Psoas muscle (tissue), 8 donors: ENCODE measurements at regions of chr19 and their contacts with region 1.

Region 1: GRCh38 chr19:29665215-29665825 is at the start of gene PLEKHF1:
- DNase-seq: peak; percentile 93 to 97
- ATAC-seq: peak; percentile 83 to 91 (median 87)
- H3K4me3 ChIP-seq: peak within 1 kb of the TSS; percentile 75
- H3K27ac ChIP-seq: peak within 1 kb of the TSS; percentile 86
- H3K4me1 ChIP-seq: peaks cover 57% of the 10 kb centered on the region
- H3K27me3 ChIP-seq: no peaks in the 10 kb centered on the region
- CTCF ChIP-seq: no peak
- total RNA-seq, gene PLEKHF1: 5.1 to 119 (median 44.0) TPM

Region 2: GRCh38 chr19:29338480-29338879 is 326.8 kb before region 1 on chr19:
- intact Hi-C with region 1: no loop called
- DNase-seq: no peak
- ATAC-seq: no peak
- H3K4me3 ChIP-seq: no peak overlapping the region
- H3K27ac ChIP-seq: no peak overlapping the region
- H3K4me1 ChIP-seq: no peaks in the 10 kb centered on the region
- H3K27me3 ChIP-seq: peaks cover 0 to 2% (median 2%) of the 10 kb centered on the region in 3 donors
- CTCF ChIP-seq: no peak

Region 3: GRCh38 chr19:29694669-29695627 is 29.6 kb after region 1 on chr19:
- intact Hi-C with region 1: loop called in 1 of 2 experiments (anchors 2 kb)
- DNase-seq: peak; percentile 92 to 95
- ATAC-seq: peak; percentile 92 to 96 (median 94)
- H3K4me3 ChIP-seq: no peak overlapping the region
- H3K27ac ChIP-seq: peak overlapping the region; percentile 46
- H3K4me1 ChIP-seq: peaks cover 9% of the 10 kb centered on the region
- H3K27me3 ChIP-seq: no peaks in the 10 kb centered on the region
- CTCF ChIP-seq: peak; percentile 91